IMR-90 (cell line): ENCODE measurements at regions of chr10 and their contacts with region 1.

Region 1: DNA sequence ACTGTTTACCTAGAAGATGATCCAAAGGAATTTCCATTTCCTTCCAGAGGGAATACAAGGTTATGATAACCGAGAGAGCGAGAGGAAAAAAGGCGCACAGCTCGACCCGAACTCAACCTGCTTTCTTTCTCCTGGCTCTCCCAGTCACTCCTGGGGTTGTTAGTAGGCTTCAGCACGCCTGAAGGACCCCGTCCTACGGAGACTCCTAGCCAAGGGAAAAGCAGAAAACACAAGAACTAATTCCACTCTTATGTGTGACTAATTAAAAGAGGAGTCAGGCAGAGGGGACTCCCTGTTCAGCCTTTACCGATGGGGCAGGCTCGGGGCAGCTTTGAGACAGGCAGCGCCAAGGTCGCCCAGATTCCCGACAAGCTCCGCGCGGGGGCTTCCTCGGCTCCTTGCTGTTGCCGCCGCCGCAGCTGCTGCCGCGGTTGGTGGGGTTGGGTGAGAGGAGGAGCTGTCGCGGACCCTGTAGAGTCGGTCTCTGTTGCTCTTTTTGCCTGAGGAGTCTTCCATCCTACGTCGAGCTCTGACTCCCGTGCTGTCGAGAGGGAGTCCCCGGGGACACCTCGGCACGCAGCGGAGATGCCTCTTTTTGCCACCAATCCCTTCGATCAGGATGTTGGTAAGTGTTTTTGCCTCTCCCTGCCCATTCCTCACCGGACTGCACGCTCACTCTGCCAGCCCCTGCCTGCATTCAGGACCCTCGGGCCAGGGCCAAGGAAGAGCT is at the start of gene STAM:
- DNase-seq: peak; percentile 91
- ATAC-seq: peak; percentile 94
- H3K4me3 ChIP-seq: peak within 1 kb of the TSS; percentile 83
- H3K27ac ChIP-seq: peak within 1 kb of the TSS; percentile 95
- H3K4me1 ChIP-seq: peaks cover 2% of the 10 kb centered on the region
- H3K27me3 ChIP-seq: no peaks in the 10 kb centered on the region
- CTCF ChIP-seq: no peak
- POLR2A ChIP-seq: peak; percentile 88
- RAD21 ChIP-seq: no peak
- total RNA-seq, gene STAM: 22.9 and 31.9 TPM in 2 replicates

Region 2: DNA sequence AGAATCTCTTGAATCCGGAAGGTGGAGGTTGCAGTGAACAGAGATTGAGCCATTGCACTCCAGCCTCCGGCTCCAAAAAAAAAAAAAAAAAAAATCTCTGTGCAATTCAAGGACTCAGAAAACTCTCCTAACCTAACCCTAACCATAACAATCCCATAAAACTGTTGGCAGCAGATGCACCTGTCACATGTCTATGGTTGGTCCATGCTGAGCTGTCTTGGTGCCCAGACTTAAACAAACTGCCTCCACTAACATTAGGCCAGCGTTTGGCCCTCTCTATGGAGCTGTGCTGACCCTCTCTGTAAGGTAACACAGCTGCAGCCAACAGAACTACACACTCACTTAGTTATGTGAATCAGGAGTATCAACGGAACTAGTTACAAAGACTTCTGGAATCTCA is 1339.6 kb before region 1 on chr10:
- CTCF ChIA-PET with region 1: no interaction called
- POLR2A ChIA-PET with region 1: no interaction called
- dilution Hi-C with region 1: no loop called
- in situ Hi-C with region 1: no loop called
- intact Hi-C with region 1: no loop called
- DNase-seq: no peak
- ATAC-seq: no peak
- H3K4me3 ChIP-seq: no peak overlapping the region
- H3K27ac ChIP-seq: no peak overlapping the region
- H3K4me1 ChIP-seq: no peaks in the 10 kb centered on the region
- H3K27me3 ChIP-seq: no peaks in the 10 kb centered on the region
- CTCF ChIP-seq: no peak
- POLR2A ChIP-seq: no peak
- RAD21 ChIP-seq: no peak

Region 3: GRCh38 chr10:17412323-17412722 is 231.6 kb before region 1 on chr10:
- CTCF ChIA-PET with region 1: no interaction called
- POLR2A ChIA-PET with region 1: interaction called, 11 read pairs
- dilution Hi-C with region 1: no loop called
- in situ Hi-C with region 1: no loop called
- intact Hi-C with region 1: no loop called
- DNase-seq: no peak
- ATAC-seq: no peak
- H3K4me3 ChIP-seq: no peak overlapping the region
- H3K27ac ChIP-seq: no peak overlapping the region
- H3K4me1 ChIP-seq: no peaks in the 10 kb centered on the region
- H3K27me3 ChIP-seq: peaks cover 19% of the 10 kb centered on the region
- CTCF ChIP-seq: no peak
- POLR2A ChIP-seq: no peak
- RAD21 ChIP-seq: no peak

Region 4: GRCh38 chr10:17617031-17617911 is 26.6 kb before region 1 on chr10 and contains the start of gene HACD1:
- CTCF ChIA-PET with region 1: interaction called, 3 read pairs
- POLR2A ChIA-PET with region 1: no interaction called
- dilution Hi-C with region 1: no loop called
- in situ Hi-C with region 1: no loop called
- intact Hi-C with region 1: loop called (anchors 2 kb)
- DNase-seq: peak; percentile 75
- ATAC-seq: peak; percentile 87
- H3K4me3 ChIP-seq: peak within 1 kb of the TSS; percentile 61
- H3K27ac ChIP-seq: peak within 1 kb of the TSS; percentile 78
- H3K4me1 ChIP-seq: no peaks in the 10 kb centered on the region
- H3K27me3 ChIP-seq: no peaks in the 10 kb centered on the region
- CTCF ChIP-seq: peak; percentile 19; the same call in 1 of the 2 replicates
- POLR2A ChIP-seq: 0 out of 2 replicates have a peak, but pooled peaks have one; percentile 33
- RAD21 ChIP-seq: no peak
- total RNA-seq, gene HACD1: 10.0 and 23.6 TPM in 2 replicates